ENCODE measurements at regions of chr4 and their contacts with region 1.

Region 1: DNA sequence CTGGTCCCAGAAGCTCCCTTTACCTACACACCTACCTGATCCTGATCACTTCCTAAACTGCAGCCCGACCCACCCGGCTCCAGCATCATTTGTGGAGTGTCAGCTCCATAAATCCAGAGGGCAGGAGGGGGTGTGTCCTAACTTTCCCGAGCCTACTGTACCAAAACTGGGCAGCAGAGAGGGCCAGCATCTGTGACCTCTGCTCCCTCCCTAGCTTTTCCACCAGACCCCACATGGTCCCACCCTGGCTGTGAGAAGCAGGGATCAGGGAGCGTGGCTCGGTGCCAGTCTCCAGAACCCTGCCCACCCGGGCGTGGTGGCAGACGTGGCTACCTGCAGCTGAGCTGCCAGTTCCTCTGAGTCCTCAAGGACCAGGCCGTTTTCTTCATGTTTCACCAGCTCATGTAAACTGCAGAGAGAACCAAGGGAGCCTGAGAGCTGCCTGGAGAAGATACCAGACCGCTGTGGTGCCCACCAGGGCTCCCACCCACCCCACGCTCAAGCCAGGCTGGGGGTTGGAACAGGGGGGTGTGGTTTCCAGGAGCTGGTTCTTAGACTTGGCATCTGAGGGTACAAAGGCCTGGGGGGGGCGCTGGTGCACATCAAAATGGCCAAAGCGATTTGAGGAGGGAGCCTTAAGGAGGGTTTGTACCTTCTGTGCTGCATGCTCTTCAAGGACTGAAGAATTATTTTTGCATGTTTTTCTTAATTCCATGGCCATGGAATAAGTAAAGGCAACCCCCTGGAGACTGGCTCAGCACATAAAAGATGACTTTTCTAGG is 76.7 kb upstream of the DRD5 start:
- DNase-seq: no peak
- ATAC-seq: no peak
- H3K4me3 Mint-ChIP-seq: no peak overlapping the region
- H3K27ac Mint-ChIP-seq: no peak overlapping the region
- H3K4me1 Mint-ChIP-seq: peaks cover 20% of the 10 kb centered on the region
- H3K27me3 Mint-ChIP-seq: no peaks in the 10 kb centered on the region

Region 2: GRCh38 chr4:9691238-9692065 is 13.3 kb before region 1 on chr4:
- CTCF ChIA-PET with region 1: interaction called, 12 read pairs
- DNase-seq: peak; percentile 93
- ATAC-seq: peak; percentile 100
- H3K4me3 Mint-ChIP-seq: peak overlapping the region; percentile 72
- H3K27ac Mint-ChIP-seq: peak overlapping the region; percentile 75
- H3K4me1 Mint-ChIP-seq: peaks cover 17% of the 10 kb centered on the region
- H3K27me3 Mint-ChIP-seq: peaks cover 7% of the 10 kb centered on the region